Breast epithelium (tissue), 4 donors: ENCODE measurements at regions of chr2 and their contacts with region 1.

Region 1: DNA sequence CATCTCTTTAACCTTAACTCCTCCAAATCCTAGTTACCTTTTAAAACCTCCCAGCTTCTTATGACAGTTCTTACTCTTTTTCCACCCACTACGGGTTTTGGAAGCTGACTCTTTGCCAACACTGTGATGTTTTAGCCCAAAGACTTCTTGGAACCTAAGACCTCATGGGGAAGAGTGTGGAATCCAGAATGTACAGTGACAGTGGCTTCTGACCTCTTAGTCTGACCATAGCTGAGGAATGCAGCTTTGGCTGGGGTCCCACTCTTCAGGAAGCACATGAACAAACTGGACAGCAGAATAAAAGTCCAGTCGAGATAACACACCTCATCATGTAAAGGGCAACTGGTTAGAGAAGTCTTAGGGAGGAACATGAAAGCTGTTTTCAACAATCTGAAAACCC is 161.1 kb upstream of the PKDCC start:
- DNase-seq: no peak
- H3K4me3 ChIP-seq: no peak overlapping the region
- H3K27ac ChIP-seq: no peak overlapping the region
- H3K4me1 ChIP-seq: no peaks in the 10 kb centered on the region
- H3K27me3 ChIP-seq: no peaks in the 10 kb centered on the region
- CTCF ChIP-seq: no peak
- POLR2A ChIP-seq: no peak

Region 2: DNA sequence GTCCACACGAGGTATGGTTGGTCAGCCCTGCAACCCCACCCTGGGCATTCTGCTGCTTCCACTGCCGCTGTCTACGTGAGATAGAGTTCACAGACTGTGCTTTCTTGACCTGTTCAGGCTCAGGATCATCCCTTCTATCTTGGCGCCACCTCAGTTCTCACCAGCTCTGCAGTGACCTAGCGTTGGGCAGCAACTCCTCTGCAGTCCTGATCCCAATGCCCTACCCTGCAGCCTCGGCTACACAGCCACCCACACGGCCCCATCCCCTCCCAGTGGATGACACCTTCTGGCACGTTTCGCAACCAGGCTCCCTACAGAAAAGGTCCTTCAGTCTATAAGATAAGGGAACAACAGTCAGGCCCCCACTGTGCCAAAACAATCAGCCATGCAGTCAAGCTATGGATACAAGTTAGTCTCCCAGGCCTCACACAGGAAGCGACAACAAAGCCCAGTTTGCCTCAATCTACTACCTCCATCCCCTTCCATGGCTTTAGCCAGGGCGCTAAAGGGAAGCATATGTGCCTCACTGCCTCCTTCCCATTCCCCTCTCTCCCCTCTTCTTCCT is 156.9 kb before region 1 on chr2:
- intact Hi-C with region 1: no loop called
- DNase-seq: no peak
- H3K4me3 ChIP-seq: no peak overlapping the region
- H3K27ac ChIP-seq: no peak overlapping the region
- H3K4me1 ChIP-seq: no peaks in the 10 kb centered on the region
- H3K27me3 ChIP-seq: no peaks in the 10 kb centered on the region
- CTCF ChIP-seq: no peak
- POLR2A ChIP-seq: no peak

Region 3: GRCh38 chr2:42214669-42215068 is 327.9 kb after region 1 on chr2:
- intact Hi-C with region 1: loop called (anchors 5 kb)
- DNase-seq: no peak
- H3K4me3 ChIP-seq: no peak overlapping the region
- H3K27ac ChIP-seq: no peak overlapping the region
- H3K4me1 ChIP-seq: no peaks in the 10 kb centered on the region
- H3K27me3 ChIP-seq: no peaks in the 10 kb centered on the region
- CTCF ChIP-seq: no peak
- POLR2A ChIP-seq: no peak